Left colon (tissue), 2 donors: ENCODE measurements at regions of chr7 and their contacts with region 1.

Region 1: GRCh38 chr7:74206589-74207120 is 3.2 kb upstream of the LAT2 start:
- DNase-seq: peak; percentile 74 to 91
- ATAC-seq: peak; percentile 83

Region 2: GRCh38 chr7:74334030-74334429 is 127.4 kb after region 1 on chr7:
- intact Hi-C with region 1: no loop called
- DNase-seq: no peak
- ATAC-seq: no peak

Region 3: DNA sequence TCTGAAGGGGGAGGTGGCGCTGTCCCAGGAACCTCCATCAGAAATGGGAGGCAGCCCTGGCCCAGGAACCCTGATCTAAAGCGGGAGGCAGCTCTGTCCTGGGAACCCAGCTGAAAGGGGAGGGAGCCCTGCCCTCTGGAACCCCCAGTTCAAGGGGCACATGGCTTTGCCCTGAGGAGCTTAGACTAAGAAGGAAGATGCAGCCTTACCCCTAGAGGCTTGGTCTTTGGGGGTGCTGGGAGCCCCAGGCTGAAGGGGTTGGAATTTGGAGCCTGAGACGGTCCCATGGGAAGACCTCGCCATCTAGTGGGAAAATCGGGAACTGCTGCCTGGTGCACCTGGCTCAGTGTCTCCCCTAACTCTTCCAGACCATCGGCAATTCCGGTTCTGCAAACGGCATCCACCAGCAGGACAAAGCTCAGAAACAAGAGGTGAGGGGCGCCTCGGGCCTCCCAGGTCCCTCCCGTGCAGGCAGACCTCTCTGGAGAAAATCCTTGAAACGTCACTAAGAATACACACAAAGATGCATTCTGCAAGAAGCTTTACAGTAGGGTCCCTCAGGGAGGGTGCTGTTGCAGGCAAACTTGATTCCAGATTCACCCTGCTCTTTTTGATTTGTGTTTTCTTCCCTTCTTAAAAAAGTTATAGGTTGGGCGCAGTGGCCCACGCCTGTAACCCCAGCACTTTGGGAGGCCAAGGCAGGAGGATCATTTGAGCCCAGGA is 194.6 kb after region 1 on chr7:
- intact Hi-C with region 1: loop called in 1 of 2 experiments (anchors 2 kb)
- DNase-seq: peak in 1 of 2 donors; percentile 82
- ATAC-seq: peak; percentile 61